PC-9 (cell line): ENCODE measurements at regions of chr16 and their contacts with region 1.

Region 1: DNA sequence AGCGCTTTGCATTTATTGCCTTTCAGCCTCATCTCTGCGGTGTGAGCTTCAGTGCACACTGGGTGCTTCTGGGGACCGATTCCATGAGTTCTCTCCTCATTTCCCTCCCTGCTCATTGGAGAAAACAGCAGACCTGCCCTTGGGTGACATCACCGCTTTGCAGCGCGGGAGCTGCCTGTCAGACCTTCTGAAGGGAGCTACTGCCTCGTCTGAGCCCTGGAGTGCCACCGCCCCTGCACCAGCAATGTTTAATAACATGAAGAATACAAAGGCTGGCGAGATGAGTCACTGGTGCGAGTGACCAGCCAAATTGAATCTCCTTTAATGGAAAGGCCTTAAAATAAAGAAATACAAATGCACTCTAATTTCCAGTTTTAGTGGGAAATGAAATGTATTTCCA is 30.3 kb upstream of the CPPED1 start:
- DNase-seq: peak; percentile 92 to 95
- H3K4me3 ChIP-seq: peak overlapping the region; percentile 19; the same call in 1 of the 2 replicates
- H3K27ac ChIP-seq: peak overlapping the region; percentile 93
- H3K4me1 ChIP-seq: peaks cover 27% of the 10 kb centered on the region
- H3K27me3 ChIP-seq: no peaks in the 10 kb centered on the region
- CTCF ChIP-seq: no peak

Region 2: DNA sequence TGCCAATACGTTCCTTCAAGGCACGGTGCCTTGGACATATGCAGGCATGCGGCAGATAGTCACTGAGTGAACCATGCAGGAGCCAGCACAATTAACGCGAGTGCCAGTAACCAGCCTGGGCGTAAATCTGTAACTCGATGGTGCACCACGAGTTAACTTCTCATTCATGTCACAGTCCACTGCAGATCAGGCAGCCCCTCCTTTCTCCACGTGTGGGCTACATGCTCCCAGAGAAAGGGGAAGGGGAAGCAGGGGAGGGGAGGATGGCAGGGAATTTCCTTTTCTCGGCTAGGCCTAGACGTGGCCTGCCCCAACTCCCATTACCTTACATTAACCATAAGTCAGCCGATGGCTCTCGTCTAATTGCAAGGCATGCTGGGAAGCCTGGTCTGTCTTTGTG is 318.2 kb before region 1 on chr16:
- CTCF ChIA-PET with region 1: no interaction called
- POLR2A ChIA-PET with region 1: interaction called, 12 read pairs
- intact Hi-C with region 1: no loop called
- DNase-seq: no peak
- H3K4me3 ChIP-seq: no peak overlapping the region
- H3K27ac ChIP-seq: no peak overlapping the region
- H3K4me1 ChIP-seq: peaks cover 17% of the 10 kb centered on the region
- H3K27me3 ChIP-seq: no peaks in the 10 kb centered on the region
- CTCF ChIP-seq: no peak

Region 3: DNA sequence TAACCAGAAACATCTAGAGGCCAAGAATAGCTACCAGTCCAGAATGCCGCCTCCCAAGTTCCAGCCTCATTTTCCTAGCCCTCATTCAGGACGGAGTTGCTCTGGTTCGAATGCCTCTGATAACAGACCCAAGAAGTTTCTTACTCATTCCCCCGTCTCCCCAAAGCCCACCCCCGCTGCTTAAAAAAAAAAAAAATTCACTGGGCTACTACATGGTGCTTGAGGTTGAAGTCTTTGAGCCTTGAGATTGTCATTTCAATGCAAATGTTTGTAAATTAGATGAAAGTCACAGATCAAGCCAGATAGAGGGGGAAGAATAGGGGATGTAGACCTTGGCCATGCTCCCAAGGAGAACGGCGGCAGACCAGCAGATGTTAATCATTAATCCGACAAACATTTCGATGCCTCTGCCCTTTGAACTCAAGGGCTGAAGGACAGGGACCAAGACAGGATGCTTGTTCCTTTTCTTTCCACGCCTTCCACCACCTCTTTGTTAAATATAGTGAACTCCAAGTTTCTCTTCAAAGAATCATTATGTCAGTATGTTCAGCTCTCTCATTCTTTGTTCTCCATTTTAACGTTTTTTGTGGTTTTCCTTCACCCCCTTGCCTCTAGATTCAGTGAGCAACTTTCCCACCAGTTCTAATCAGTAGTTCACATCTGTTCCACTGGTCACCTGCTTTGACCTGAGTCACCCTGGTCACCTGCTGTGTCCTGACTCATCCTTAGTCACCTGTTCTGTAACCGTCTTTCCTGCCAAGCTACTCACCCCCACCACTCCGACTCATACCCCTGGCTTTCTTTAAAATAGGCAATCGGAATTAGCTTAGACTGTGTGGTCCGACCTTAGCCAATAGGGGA is 220.6 kb before region 1 on chr16:
- CTCF ChIA-PET with region 1: no interaction called
- POLR2A ChIA-PET with region 1: no interaction called
- intact Hi-C with region 1: loop called (anchors 1 kb)
- DNase-seq: peak; percentile 89 to 97
- H3K4me3 ChIP-seq: peak overlapping the region; percentile 46; the same call in 1 of the 2 replicates
- H3K27ac ChIP-seq: peak overlapping the region; percentile 100
- H3K4me1 ChIP-seq: peaks cover 55% of the 10 kb centered on the region
- H3K27me3 ChIP-seq: no peaks in the 10 kb centered on the region
- CTCF ChIP-seq: no peak